ENCODE measurements at regions of chr4 and their contacts with region 1.

Region 1: DNA sequence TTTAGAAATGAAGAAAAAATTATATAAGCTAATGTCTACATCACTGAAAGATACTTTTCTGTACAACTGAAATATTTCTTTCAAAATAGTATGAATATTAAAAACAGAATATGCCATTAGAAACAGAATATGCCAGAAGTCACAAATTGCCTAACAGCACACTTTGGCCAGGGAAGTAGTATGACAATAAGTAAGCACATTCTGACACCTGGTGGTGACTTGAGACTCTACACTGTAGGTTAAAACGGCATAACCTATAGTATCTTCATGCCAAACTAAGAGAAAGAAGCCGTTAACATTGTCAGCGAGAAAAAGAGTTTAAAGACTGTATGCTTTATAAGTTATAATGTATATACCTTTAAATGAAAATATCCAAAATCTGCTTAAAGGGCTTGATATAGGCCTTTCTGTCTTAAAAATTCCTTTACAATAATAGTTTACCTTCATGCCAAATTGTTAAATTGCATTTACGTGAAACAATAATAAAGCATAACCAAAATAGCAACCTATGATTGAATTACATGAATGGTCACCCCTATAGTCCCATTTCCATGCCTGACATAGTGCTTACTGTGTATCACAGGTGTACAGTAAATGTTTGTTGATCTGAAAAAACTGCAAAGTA is 32.8 kb downstream of the FAM13A start:
- DNase-seq: peak; percentile 62
- H3K4me3 ChIP-seq: no peak overlapping the region
- H3K27ac ChIP-seq: no peak overlapping the region
- H3K4me1 ChIP-seq: no peaks in the 10 kb centered on the region
- H3K27me3 ChIP-seq: no peaks in the 10 kb centered on the region
- CTCF ChIP-seq: peak; percentile 87
- EP300 ChIP-seq: no peak
- RAD21 ChIP-seq: peak; percentile 100

Region 2: DNA sequence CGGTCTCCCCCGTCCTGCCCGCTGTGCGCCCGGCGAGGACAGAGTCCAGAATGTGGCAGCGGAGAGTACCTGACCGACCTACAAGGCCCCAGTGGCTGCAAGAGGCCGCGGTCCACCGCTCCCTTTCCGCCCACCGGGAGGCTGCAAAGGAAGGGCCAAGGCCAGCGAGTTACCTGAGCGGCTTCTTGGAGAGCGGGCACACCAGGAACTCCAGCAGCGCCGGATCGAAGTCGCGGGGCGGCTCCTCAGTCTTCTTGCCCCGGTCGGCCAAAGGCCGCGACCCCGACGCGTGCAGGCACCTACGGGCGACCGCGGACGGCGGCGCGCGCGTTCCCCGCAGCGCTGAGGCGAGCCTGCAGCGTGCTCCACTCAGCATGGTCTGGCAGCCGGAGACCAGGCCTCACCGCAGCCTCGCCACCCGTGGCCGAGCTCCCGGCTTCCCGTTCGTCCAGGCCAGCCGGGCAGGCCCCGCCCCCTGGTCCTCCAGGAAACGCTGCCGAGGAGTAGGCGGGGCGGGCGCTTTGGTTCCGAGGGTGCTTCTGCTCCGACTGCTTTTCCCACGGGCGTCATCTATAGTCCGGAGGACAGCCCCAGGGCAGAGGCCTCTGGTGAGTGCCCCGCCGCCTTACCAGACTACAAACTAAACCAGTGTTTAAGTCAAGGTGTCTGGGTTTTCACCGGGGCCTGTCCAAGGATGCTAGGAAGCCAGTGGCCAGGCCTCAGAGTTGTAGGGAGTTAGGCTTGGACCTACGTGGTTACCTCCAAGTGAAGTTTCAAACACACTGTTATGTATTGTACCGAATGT is 500.6 kb before region 1 on chr4 and contains the start of gene PYURF:
- CTCF ChIA-PET with region 1: interaction called, 11 read pairs
- POLR2A ChIA-PET with region 1: interaction called, 3 read pairs
- DNase-seq: peak; percentile 93
- H3K4me3 ChIP-seq: peak within 1 kb of the TSS; percentile 92 to 95
- H3K27ac ChIP-seq: peak within 1 kb of the TSS; percentile 89 to 97
- H3K4me1 ChIP-seq: peaks cover 0 to 13% of the 10 kb centered on the region in 2 experiments; a peak in 2 of 4 replicates
- H3K27me3 ChIP-seq: no peaks in the 10 kb centered on the region
- CTCF ChIP-seq: no peak
- EP300 ChIP-seq: peak in 1 of 2 experiments; percentile 30; a peak in 1 of 4 replicates
- RAD21 ChIP-seq: no peak
- polyA plus RNA-seq, gene PYURF: 52.0 and 63.2 TPM in 2 replicates

Region 3: GRCh38 chr4:88706574-88706973 is 317.6 kb before region 1 on chr4:
- CTCF ChIA-PET with region 1: interaction called, 47 read pairs
- POLR2A ChIA-PET with region 1: no interaction called
- DNase-seq: peak; percentile 57
- H3K4me3 ChIP-seq: no peak overlapping the region
- H3K27ac ChIP-seq: peak overlapping the region in 1 of 2 experiments; percentile 25; a peak in 1 of 4 replicates
- H3K4me1 ChIP-seq: peaks cover 0 to 2% of the 10 kb centered on the region in 2 experiments; a peak in 1 of 4 replicates
- H3K27me3 ChIP-seq: no peaks in the 10 kb centered on the region
- CTCF ChIP-seq: peak; percentile 68
- EP300 ChIP-seq: no peak
- RAD21 ChIP-seq: peak; percentile 88

Region 4: DNA sequence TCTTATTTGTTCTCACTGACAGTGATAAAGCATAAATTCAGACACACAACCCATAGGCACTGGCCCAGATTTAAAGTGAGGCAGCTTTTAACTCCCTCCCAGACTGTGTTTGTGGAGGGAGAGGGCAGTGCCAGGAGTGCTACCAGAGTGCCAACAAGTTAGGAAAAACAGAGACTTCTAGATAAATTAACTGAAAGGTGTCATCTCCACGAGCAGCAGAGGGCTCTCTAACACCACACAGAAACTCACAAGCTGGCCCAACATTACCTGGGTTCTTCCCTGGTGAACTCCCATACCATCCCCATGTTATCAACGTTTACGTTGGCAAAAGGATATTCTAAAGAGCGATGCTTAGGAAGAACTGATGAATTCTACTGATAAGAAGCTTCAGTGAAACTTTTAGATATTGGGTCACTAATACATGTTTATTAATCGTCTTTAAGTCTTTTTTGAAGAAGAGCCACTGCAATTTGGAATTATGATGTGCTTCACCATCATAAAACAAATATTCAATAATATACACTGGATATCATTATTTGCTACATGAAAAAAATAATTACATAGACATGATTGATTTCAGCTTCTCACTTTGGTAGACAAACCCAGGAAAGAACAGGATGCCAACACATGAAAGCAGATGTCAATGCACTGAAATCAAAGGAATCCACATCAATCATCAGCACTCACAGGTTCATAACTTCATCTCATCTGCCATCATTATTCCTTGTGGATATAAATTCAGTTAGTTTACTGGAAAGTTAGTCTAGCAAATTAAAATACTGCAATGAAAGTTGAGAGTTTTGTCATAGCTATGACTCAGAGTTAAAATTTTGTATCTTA is 205.3 kb before region 1 on chr4:
- CTCF ChIA-PET with region 1: interaction called, 184 read pairs
- POLR2A ChIA-PET with region 1: no interaction called
- DNase-seq: peak; percentile 13
- H3K4me3 ChIP-seq: no peak overlapping the region
- H3K27ac ChIP-seq: peak overlapping the region in 1 of 2 experiments; percentile 47; a peak in 2 of 4 replicates
- H3K4me1 ChIP-seq: peaks cover 0 to 9% of the 10 kb centered on the region in 2 experiments; a peak in 2 of 4 replicates
- H3K27me3 ChIP-seq: no peaks in the 10 kb centered on the region
- CTCF ChIP-seq: peak; percentile 59
- EP300 ChIP-seq: no peak
- RAD21 ChIP-seq: peak; percentile 92

Region 5: DNA sequence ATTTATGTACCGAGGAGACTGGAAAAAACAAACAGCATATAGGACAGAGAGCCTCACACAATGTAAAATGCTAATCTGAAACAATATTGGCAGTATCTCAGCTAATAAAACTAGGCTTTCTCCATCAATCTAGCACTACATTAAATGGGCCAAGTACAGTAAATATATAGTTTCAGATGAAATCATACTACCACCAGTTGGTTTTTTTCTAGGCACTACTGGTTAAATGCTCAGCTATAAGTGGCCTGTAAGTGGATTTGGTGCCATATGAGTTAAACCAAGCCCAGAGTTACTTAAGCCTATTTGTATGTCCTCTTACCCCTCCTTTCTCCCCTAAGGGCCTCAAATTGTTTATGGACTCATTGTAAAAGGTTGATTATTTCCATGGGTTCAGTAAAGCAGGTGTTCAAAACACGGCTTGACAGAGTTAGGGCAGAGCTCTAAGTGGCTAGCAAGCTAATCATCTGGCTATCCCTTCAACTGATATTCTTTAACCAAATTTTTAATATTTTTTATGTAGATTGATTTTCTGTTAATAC is 24.7 kb before region 1 on chr4:
- CTCF ChIA-PET with region 1: interaction called, 15 read pairs
- POLR2A ChIA-PET with region 1: no interaction called
- DNase-seq: no peak
- H3K4me3 ChIP-seq: no peak overlapping the region
- H3K27ac ChIP-seq: no peak overlapping the region
- H3K4me1 ChIP-seq: peaks cover 0 to 10% of the 10 kb centered on the region in 2 experiments; a peak in 2 of 4 replicates
- H3K27me3 ChIP-seq: no peaks in the 10 kb centered on the region
- CTCF ChIP-seq: no peak
- EP300 ChIP-seq: no peak
- RAD21 ChIP-seq: no peak

Region 6: GRCh38 chr4:89283226-89284009 is 259.3 kb after region 1 on chr4:
- CTCF ChIA-PET with region 1: no interaction called
- POLR2A ChIA-PET with region 1: no interaction called
- DNase-seq: no peak
- H3K4me3 ChIP-seq: no peak overlapping the region
- H3K27ac ChIP-seq: no peak overlapping the region
- H3K4me1 ChIP-seq: no peaks in the 10 kb centered on the region; a peak in 1 of 4 replicates
- H3K27me3 ChIP-seq: no peaks in the 10 kb centered on the region
- CTCF ChIP-seq: no peak
- EP300 ChIP-seq: no peak
- RAD21 ChIP-seq: no peak

Measured in SK-N-SH (cell line).